ENCODE measurements at regions of chr1 and their contacts with region 1.

Region 1: GRCh38 chr1:147541672-147542568 is 619 bp downstream of the BCL9 start:
- DNase-seq: no peak
- H3K4me3 ChIP-seq: peak overlapping the region; percentile 50 to 74 (median 64)
- H3K27ac ChIP-seq: peak overlapping the region; percentile 85 to 94 (median 92)
- H3K4me1 ChIP-seq: peaks cover 9 to 77% (median 41%) of the 10 kb centered on the region in 3 donors
- H3K27me3 ChIP-seq: no peaks in the 10 kb centered on the region
- CTCF ChIP-seq: no peak
- POLR2A ChIP-seq: no peak

Region 2: DNA sequence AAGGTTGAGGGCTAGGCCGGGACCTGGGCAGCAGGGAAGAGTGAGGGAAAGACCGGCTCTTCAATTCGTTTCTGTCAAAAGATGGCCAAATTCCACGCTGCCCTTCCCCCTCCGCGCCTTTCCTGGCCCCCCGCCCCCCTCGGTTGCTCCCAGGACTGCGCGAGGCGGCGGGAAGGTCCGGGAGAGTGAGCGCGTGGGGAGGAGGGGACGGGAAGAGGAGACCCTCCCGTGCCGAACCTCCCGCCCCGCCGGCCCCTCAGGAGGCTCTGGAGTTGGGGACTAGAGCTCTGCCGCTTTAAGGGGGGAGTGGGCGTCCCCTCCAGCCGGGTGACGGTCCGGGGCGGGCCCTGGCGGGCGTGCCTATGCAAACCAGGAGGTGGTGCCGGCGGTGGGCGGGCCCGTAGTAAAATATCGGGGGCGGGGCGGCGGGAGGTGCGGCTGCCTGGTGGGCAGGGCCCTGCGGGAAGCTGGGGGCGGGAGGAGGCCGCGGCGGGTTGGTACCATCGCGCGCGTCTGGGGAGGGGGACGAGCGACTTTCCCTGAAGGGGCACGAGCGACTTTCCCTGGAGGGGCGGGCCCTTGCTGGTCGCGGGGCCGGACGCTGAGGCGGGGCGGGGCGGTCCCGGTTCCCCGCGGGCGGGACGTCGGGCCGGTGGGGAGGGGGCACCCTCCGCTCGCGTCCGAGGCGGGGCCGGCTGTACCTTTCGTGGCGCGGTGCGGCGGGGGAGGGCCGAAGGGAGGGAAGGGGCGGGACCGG is 57.6 kb after region 1 on chr1:
- intact Hi-C with region 1: loop called (anchors 5 kb)
- DNase-seq: peak; percentile 88
- H3K4me3 ChIP-seq: peak overlapping the region; percentile 73 to 87 (median 81)
- H3K27ac ChIP-seq: peak overlapping the region; percentile 84 to 93 (median 92)
- H3K4me1 ChIP-seq: peaks cover 6 to 20% (median 11%) of the 10 kb centered on the region in 3 donors
- H3K27me3 ChIP-seq: no peaks in the 10 kb centered on the region
- CTCF ChIP-seq: peak in 1 of 6 experiments; percentile 5
- POLR2A ChIP-seq: peak in 3 of 4 donors; percentile 50 to 65 (median 64)

Measured in esophagus squamous epithelium (tissue), 5 donors.